ENCODE measurements at regions of chrX and their contacts with region 1.

Region 1: GRCh38 chrX:12955882-12956703 is 18.8 kb upstream of the TMSB4X start:
- DNase-seq: peak; percentile 76
- ATAC-seq: peak; percentile 45
- H3K4me3 Mint-ChIP-seq: peak overlapping the region; percentile 82
- H3K27ac Mint-ChIP-seq: peak overlapping the region; percentile 98
- H3K4me1 Mint-ChIP-seq: peaks cover 64% of the 10 kb centered on the region
- H3K27me3 Mint-ChIP-seq: no peaks in the 10 kb centered on the region

Region 2: GRCh38 chrX:12984629-12985319 is 28.7 kb after region 1 on chrX:
- CTCF ChIA-PET with region 1: interaction called, 406 read pairs
- POLR2A ChIA-PET with region 1: interaction called, 1,048 read pairs
- DNase-seq: peak; percentile 70
- ATAC-seq: peak; percentile 74
- H3K4me3 Mint-ChIP-seq: peak overlapping the region; percentile 52
- H3K27ac Mint-ChIP-seq: peak overlapping the region; percentile 97
- H3K4me1 Mint-ChIP-seq: peaks cover 70% of the 10 kb centered on the region
- H3K27me3 Mint-ChIP-seq: no peaks in the 10 kb centered on the region

Region 3: DNA sequence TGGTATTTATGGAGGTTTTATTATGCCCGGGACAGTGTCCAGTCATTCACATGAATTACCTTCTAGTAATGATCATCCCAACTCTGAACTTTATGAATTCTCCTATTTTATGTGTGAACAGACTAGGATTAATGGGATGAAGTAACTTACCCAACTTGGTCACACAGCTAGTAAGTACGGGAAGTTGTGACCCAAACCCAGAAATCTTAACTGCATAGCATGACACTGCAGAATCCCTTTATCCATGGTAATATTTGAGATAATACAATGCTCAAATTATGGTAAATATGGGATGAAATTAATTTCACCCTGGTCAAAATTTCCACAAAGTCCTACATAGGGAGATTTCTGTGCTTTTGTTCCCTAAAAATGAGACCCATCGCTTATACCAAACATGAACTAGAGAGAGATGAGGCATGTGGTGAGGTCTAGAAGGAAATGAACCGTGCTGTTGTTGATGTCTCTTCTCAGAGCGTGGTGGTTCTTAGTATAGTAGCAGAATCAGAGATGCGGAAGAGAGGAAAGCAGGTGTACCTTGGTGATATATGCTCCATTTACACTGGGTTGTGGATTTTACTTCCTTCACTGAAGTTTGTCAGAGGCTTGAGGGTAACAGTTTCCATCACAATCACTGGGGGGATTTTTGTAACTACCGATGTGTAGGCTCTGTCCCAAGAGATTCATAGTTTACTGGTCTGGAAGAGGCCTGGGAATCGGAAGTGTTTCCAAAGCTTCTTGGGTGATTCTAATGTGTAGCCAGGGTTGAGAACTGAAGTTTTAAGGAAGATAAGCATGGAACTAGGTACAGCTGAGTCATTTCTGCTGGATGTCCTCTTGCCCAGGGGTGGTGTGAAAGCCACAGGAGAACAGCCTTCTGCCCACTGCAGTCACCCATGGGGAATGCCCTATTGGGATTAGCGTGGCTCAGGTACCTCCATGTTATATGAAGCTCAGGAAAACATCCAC is 118.5 kb after region 1 on chrX:
- CTCF ChIA-PET with region 1: no interaction called
- POLR2A ChIA-PET with region 1: interaction called, 10 read pairs
- DNase-seq: no peak
- ATAC-seq: peak; percentile 72
- H3K4me3 Mint-ChIP-seq: peak overlapping the region; percentile 12
- H3K27ac Mint-ChIP-seq: peak overlapping the region; percentile 80
- H3K4me1 Mint-ChIP-seq: peaks cover 56% of the 10 kb centered on the region
- H3K27me3 Mint-ChIP-seq: no peaks in the 10 kb centered on the region

Region 4: GRCh38 chrX:13081395-13082205 is 125.5 kb after region 1 on chrX:
- CTCF ChIA-PET with region 1: interaction called, 11 read pairs
- POLR2A ChIA-PET with region 1: interaction called, 55 read pairs
- DNase-seq: no peak
- ATAC-seq: peak; percentile 27
- H3K4me3 Mint-ChIP-seq: peak overlapping the region; percentile 63
- H3K27ac Mint-ChIP-seq: peak overlapping the region; percentile 95
- H3K4me1 Mint-ChIP-seq: peaks cover 90% of the 10 kb centered on the region
- H3K27me3 Mint-ChIP-seq: no peaks in the 10 kb centered on the region

Measured in activated CD8-positive, alpha-beta T cell treated with anti-CD3 and anti-CD28 coated beads, Interleukin-2, amount 10 ng/mL, durations not matched to agents 7 days and 5 days (primary cell).